ENCODE measurements at regions of chr17 and their contacts with region 1.

Region 1: DNA sequence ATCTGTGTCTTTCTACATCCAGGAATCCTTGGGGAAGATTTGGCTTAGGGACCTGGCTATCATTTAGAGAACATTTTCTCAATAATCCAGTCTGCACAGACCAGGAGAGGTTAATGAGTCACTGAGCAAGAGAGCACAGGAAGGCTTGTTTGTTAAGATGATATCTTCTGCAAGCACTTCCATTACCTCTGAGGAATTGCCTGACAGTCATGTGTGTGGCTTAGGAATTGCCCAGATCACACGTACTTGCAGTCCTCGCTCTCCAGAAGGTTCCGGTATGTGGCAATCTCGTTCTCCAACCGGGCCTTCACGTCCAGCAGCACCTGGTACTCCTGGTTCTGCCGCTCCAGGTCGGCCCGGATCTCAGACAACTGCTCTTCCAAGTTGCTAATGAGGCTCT is 3.3 kb downstream of the KRT37 start:
- DNase-seq: no peak
- H3K4me3 ChIP-seq: no peak overlapping the region
- H3K27ac ChIP-seq: no peak overlapping the region
- H3K4me1 ChIP-seq: no peaks in the 10 kb centered on the region
- H3K27me3 ChIP-seq: no peaks in the 10 kb centered on the region
- CTCF ChIP-seq: no peak

Region 2: DNA sequence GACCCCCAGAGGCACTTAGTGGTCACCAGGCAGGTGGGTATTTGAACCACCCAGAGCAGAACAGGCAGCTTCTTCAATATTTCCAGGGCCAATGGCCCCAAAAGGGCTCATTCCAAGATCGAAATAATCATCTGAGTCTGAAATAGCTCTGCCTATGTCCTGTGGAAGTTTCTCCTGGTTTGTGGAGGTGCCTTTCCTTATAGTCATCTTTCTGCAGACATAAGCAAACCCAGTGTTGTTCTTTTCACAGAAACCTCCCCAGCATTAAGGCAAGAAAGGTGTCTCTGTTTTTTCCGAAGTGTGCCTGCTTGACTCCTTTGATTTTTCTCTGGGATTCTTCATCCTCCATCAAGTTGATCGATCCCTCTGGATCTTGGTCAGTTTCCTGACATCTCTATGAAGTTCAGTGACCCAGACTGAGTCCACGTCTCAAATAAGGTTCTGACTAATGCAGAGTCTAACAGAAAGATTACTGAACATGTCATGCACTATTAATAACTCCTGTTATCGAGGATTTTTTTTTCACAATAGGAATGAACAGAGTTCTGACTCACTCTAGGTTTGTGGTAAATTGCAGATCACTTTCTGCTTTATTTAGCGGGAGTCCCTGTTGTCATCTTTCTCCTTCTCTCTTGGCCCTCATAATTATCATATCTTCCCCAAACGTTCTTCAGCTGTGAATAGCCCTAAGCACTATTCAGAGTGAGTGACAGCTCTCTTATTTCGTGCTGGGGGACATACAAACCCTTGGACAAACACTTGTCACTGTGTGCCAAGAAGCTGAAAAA is 1492.1 kb before region 1 on chr17:
- CTCF ChIA-PET with region 1: no interaction called
- POLR2A ChIA-PET with region 1: no interaction called
- intact Hi-C with region 1: no loop called
- DNase-seq: no peak
- H3K4me3 ChIP-seq: no peak overlapping the region
- H3K27ac ChIP-seq: no peak overlapping the region
- H3K4me1 ChIP-seq: no peaks in the 10 kb centered on the region
- H3K27me3 ChIP-seq: no peaks in the 10 kb centered on the region
- CTCF ChIP-seq: no peak

Region 3: GRCh38 chr17:41439389-41439788 is 18.3 kb after region 1 on chr17:
- CTCF ChIA-PET with region 1: no interaction called
- POLR2A ChIA-PET with region 1: no interaction called
- intact Hi-C with region 1: loop called (anchors 1 kb)
- DNase-seq: no peak
- H3K4me3 ChIP-seq: no peak overlapping the region
- H3K27ac ChIP-seq: no peak overlapping the region
- H3K4me1 ChIP-seq: no peaks in the 10 kb centered on the region
- H3K27me3 ChIP-seq: no peaks in the 10 kb centered on the region
- CTCF ChIP-seq: no peak

Region 4: GRCh38 chr17:41530062-41531051 is 109.2 kb after region 1 on chr17:
- CTCF ChIA-PET with region 1: no interaction called
- POLR2A ChIA-PET with region 1: no interaction called
- intact Hi-C with region 1: no loop called
- DNase-seq: no peak
- H3K4me3 ChIP-seq: no peak overlapping the region
- H3K27ac ChIP-seq: no peak overlapping the region
- H3K4me1 ChIP-seq: no peaks in the 10 kb centered on the region
- H3K27me3 ChIP-seq: no peaks in the 10 kb centered on the region
- CTCF ChIP-seq: no peak

Measured in A673 (cell line).